ENCODE measurements at regions of chr7 and their contacts with region 1.

Region 1: GRCh38 chr7:130010689-130011412 is 40.3 kb downstream of the ZC3HC1 start:
- DNase-seq: peak; percentile 77
- H3K4me3 ChIP-seq: no peak overlapping the region
- H3K27ac ChIP-seq: peak overlapping the region; percentile 93
- H3K4me1 ChIP-seq: peaks cover 25% of the 10 kb centered on the region
- H3K27me3 ChIP-seq: no peaks in the 10 kb centered on the region
- CTCF ChIP-seq: peak; percentile 94 to 96

Region 2: GRCh38 chr7:129468087-129468486 is 542.8 kb before region 1 on chr7:
- CTCF ChIA-PET with region 1: no interaction called
- dilution Hi-C with region 1: no loop called
- in situ Hi-C with region 1: loop called in 1 of 2 experiments (anchors 25 kb)
- intact Hi-C with region 1: loop called (anchors 2 kb)
- DNase-seq: peak; percentile 20
- H3K4me3 ChIP-seq: no peak overlapping the region
- H3K27ac ChIP-seq: no peak overlapping the region
- H3K4me1 ChIP-seq: peaks cover 6% of the 10 kb centered on the region
- H3K27me3 ChIP-seq: no peaks in the 10 kb centered on the region
- CTCF ChIP-seq: no peak

Region 3: DNA sequence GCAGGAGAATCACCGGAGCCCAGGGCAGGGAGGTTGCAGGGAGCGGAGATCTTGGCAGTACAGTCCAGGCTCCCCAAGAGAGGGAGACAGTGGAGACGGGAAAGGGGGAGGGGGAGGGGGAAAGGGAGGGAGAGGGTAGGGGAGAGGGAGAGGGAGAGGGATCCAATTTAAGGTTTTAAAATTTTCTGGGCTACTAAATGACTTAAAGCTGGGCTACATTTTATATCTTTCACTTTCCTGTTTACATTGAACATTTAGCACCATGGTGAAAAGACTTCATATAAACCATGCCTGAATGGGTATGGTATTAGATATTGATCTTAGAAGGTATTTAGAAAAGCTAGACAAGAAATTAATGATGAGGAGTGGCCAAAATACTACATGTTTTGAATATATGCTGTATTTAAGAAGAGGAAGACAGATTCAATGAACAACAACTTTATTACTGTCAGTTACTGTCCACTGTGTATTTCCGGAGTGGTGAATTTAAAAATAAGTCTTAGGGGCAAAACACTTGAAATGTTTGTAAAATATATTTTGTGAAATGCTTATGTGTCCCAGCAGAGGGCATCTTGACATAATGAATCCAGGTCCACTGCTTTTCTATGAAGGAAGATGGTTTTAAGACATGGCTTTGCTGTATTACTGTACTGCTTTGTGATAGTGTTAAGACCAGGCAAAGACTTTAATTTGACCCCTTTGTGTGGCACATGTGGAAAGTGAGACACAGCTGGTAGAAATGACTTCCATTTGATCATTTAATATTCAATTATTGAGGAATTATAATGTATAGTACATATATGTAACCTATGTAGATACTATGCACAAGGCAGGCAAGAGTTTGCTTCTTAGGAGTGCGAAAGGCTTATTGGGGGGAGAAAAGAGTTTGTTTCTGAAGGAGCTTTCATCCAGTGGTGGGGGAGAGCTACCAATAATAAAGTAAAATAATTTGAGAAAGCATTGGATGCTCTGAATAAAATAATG is 346.5 kb before region 1 on chr7:
- CTCF ChIA-PET with region 1: no interaction called
- dilution Hi-C with region 1: no loop called
- in situ Hi-C with region 1: loop called (anchors 10 kb)
- intact Hi-C with region 1: loop called (anchors 1 kb)
- DNase-seq: peak; percentile 48
- H3K4me3 ChIP-seq: no peak overlapping the region
- H3K27ac ChIP-seq: peak overlapping the region; percentile 4
- H3K4me1 ChIP-seq: peaks cover 17% of the 10 kb centered on the region
- H3K27me3 ChIP-seq: no peaks in the 10 kb centered on the region
- CTCF ChIP-seq: peak; percentile 65 to 66

Region 4: GRCh38 chr7:129825496-129826267 is 185.2 kb before region 1 on chr7:
- CTCF ChIA-PET with region 1: interaction called, 4 read pairs
- dilution Hi-C with region 1: no loop called
- in situ Hi-C with region 1: loop called (anchors 5 to 25 kb)
- intact Hi-C with region 1: loop called (anchors 1 kb)
- DNase-seq: peak; percentile 73
- H3K4me3 ChIP-seq: peak overlapping the region; percentile 70 to 84 (median 70)
- H3K27ac ChIP-seq: peak overlapping the region; percentile 62
- H3K4me1 ChIP-seq: peaks cover 27% of the 10 kb centered on the region
- H3K27me3 ChIP-seq: no peaks in the 10 kb centered on the region
- CTCF ChIP-seq: peak in 1 of 2 donors; percentile 66

Region 5: DNA sequence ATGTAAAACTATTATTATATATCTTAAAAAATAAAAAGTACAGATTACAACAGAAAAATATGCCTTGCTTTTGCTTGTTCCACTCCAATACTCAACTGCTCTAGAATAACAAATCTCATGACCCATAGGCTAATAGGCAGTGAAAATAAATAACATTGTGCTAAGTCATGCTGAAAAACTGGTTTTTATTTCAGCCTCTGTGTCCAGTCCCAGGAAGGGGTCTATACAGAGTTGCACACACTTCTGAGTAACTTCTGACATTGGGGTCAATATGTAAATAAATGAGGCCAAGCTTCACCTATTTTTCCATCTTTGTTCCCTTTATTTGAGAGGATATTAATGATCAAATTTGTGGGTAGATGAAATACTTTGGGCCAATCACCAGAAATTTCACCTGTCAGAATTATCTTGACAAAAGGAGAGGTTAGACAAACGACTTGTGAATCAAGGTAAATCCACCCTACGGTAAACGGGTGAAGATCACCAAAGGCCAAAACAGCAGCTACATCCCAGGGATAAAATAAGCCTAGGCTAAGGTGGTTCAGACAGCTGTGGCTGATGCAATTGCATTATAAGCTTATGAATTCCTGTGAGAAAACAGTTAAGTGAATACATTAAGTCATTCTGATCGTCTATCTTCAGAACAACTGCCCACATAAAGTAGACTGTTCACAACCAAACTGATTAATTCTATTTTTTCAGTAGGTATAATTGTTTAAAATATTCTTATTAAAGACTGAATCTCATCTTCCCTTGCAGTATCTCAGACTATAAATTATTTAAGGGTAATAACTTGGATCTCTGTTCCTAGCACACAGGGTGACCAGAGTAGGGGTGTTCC is 145.5 kb before region 1 on chr7:
- CTCF ChIA-PET with region 1: no interaction called
- dilution Hi-C with region 1: loop called (anchors 5 kb)
- in situ Hi-C with region 1: no loop called
- intact Hi-C with region 1: no loop called
- DNase-seq: no peak
- H3K4me3 ChIP-seq: no peak overlapping the region
- H3K27ac ChIP-seq: peak overlapping the region; percentile 8
- H3K4me1 ChIP-seq: peaks cover 19% of the 10 kb centered on the region
- H3K27me3 ChIP-seq: no peaks in the 10 kb centered on the region
- CTCF ChIP-seq: no peak

Region 6: GRCh38 chr7:129969807-129970446 is 40.9 kb before region 1 on chr7:
- CTCF ChIA-PET with region 1: no interaction called
- dilution Hi-C with region 1: no loop called
- in situ Hi-C with region 1: no loop called
- intact Hi-C with region 1: loop called (anchors 1 kb)
- DNase-seq: peak; percentile 98
- H3K4me3 ChIP-seq: peak overlapping the region in 1 of 3 experiments; percentile 14
- H3K27ac ChIP-seq: peak overlapping the region; percentile 96
- H3K4me1 ChIP-seq: peaks cover 21% of the 10 kb centered on the region
- H3K27me3 ChIP-seq: no peaks in the 10 kb centered on the region
- CTCF ChIP-seq: no peak

Region 7: GRCh38 chr7:130228840-130229502 is 218.1 kb after region 1 on chr7:
- CTCF ChIA-PET with region 1: no interaction called
- dilution Hi-C with region 1: no loop called
- in situ Hi-C with region 1: no loop called
- intact Hi-C with region 1: no loop called
- DNase-seq: no peak
- H3K4me3 ChIP-seq: no peak overlapping the region
- H3K27ac ChIP-seq: no peak overlapping the region
- H3K4me1 ChIP-seq: no peaks in the 10 kb centered on the region
- H3K27me3 ChIP-seq: no peaks in the 10 kb centered on the region
- CTCF ChIP-seq: no peak